ENCODE measurements at regions of chrX and their contacts with region 1.

Region 1: DNA sequence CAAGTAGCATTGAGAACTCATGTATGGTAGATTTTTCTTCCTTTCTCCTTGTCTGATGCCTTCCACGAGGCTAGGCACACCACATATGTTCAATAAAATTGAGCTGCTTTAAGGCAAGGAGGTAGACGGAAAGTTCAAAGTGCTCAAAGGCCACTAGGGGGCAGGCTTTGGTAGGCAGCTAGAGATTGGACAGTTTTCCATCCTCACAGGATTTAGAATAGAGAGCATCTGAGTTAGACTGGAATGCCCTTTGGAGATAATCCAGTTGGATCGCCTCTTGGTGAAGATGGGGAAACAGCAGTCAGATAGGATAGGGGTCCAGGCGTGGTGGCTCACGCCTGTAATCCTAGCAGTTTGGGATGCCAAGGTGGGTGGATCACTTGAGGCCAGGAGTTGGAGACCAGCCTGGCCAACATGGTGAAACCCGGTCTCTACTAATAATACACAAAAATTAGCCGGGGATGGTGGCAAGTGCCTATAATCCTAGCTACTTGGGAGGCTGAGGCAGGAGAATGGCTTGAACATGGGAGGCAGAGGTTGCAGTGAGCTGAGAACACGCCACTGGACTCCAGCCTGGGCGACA is 30.4 kb downstream of the ELF4 start:
- DNase-seq: no peak
- H3K4me3 ChIP-seq: no peak overlapping the region
- H3K27ac ChIP-seq: peak overlapping the region; percentile 76
- H3K4me1 ChIP-seq: peaks cover 28% of the 10 kb centered on the region
- H3K27me3 ChIP-seq: no peaks in the 10 kb centered on the region
- CTCF ChIP-seq: peak; percentile 19 to 65 (median 50)
- POLR2A ChIP-seq: no peak

Region 2: DNA sequence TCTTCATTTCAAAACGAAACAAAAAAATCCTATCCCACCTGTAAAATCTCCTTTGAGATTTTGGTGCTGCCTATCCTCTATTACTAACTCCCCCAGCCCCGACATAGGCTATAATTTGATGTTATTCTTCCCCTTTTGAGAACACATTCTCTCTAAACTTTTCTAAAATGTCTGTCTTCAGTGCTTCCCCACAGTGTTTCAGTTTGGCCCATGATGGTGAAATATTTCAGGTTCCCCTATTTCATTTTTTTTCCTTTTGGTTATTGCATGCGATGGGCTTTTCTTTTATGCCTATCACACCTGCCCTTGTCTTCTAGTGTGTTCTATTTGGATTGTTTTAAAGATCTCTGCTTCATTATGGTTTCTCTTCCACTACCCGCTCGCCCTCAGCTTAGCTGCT is 82.8 kb before region 1 on chrX:
- intact Hi-C with region 1: no loop called
- DNase-seq: no peak
- H3K4me3 ChIP-seq: no peak overlapping the region
- H3K27ac ChIP-seq: no peak overlapping the region
- H3K4me1 ChIP-seq: peaks cover 11% of the 10 kb centered on the region
- H3K27me3 ChIP-seq: no peaks in the 10 kb centered on the region
- CTCF ChIP-seq: no peak
- POLR2A ChIP-seq: no peak

Region 3: GRCh38 chrX:130039847-130040246 is 40.1 kb before region 1 on chrX:
- intact Hi-C with region 1: no loop called
- DNase-seq: no peak
- H3K4me3 ChIP-seq: no peak overlapping the region
- H3K27ac ChIP-seq: no peak overlapping the region
- H3K4me1 ChIP-seq: no peaks in the 10 kb centered on the region
- H3K27me3 ChIP-seq: no peaks in the 10 kb centered on the region
- CTCF ChIP-seq: no peak
- POLR2A ChIP-seq: no peak

Region 4: GRCh38 chrX:130165703-130166502 is 86.0 kb after region 1 on chrX and contains the start of gene AIFM1:
- intact Hi-C with region 1: no loop called
- DNase-seq: peak in 1 of 2 donors; percentile 94
- H3K4me3 ChIP-seq: peak within 1 kb of the TSS; percentile 57 to 58
- H3K27ac ChIP-seq: peak within 1 kb of the TSS; percentile 85
- H3K4me1 ChIP-seq: peaks cover 10% of the 10 kb centered on the region
- H3K27me3 ChIP-seq: no peaks in the 10 kb centered on the region
- CTCF ChIP-seq: peak in 1 of 3 experiments; percentile 28
- POLR2A ChIP-seq: peak in 1 of 2 donors; percentile 32
- total RNA-seq, gene AIFM1: 14.2 TPM

Region 5: GRCh38 chrX:130190801-130191200 is 110.9 kb after region 1 on chrX:
- intact Hi-C with region 1: loop called (anchors 5 kb)
- DNase-seq: peak in 1 of 2 donors; percentile 87
- H3K4me3 ChIP-seq: no peak overlapping the region
- H3K27ac ChIP-seq: no peak overlapping the region
- H3K4me1 ChIP-seq: no peaks in the 10 kb centered on the region
- H3K27me3 ChIP-seq: no peaks in the 10 kb centered on the region
- CTCF ChIP-seq: no peak
- POLR2A ChIP-seq: no peak

Region 6: GRCh38 chrX:130497531-130497930 is 417.6 kb after region 1 on chrX:
- intact Hi-C with region 1: no loop called
- DNase-seq: no peak
- H3K4me3 ChIP-seq: no peak overlapping the region
- H3K27ac ChIP-seq: no peak overlapping the region
- H3K4me1 ChIP-seq: no peaks in the 10 kb centered on the region
- H3K27me3 ChIP-seq: no peaks in the 10 kb centered on the region
- CTCF ChIP-seq: no peak
- POLR2A ChIP-seq: no peak